ENCODE measurements at regions of chr1 and their contacts with region 1.

Region 1: DNA sequence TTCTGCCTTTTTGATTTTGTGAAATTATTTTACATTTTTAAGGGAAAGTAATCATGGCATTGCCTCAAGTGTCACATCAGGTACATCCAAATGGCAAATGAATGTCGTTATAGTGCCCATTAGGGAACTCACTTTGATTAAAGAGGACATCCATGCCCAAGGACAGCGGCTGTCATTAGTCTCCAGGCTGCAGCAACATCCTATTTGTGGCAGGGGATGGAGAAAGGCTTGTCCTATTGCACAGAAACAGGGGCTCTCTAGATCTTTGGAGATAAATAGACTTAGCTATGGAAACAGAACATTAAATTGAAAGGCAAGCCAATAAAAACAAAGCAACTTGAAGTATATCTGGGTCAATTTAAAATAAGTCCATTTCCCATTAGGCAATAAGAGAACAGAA is 439.3 kb downstream of the NEGR1 start:
- DNase-seq: no peak
- ATAC-seq: no peak
- H3K4me3 Mint-ChIP-seq: no peak overlapping the region
- H3K27ac Mint-ChIP-seq: no peak overlapping the region
- H3K4me1 Mint-ChIP-seq: no peaks in the 10 kb centered on the region
- H3K27me3 Mint-ChIP-seq: no peaks in the 10 kb centered on the region

Region 2: DNA sequence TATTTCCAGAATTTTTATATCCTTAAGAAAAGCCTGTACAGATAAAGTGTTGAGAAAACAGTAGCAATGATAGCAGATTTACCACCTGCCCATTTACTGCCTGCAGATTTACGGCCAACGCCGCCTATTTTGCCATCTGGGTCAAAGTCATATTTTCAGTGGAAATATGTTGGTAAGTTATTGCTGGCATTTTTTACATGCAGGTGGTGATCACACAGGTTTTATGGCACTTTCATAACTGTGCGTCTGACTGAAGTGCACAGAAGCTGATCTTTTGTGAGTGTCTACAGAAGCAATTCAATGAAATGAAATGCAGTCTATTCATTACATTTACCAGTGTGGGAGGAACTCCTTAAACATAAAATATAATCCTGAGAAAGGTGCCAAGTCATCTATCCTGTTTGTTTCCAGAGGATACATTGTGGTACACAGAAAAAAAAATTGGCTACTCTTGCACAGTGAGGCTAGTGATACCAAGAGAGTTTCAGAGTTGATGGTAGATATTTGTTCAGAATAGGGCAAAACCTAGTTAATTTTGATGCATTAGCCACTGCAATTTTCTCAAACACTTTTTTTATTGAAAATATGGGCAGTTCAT is 19.2 kb before region 1 on chr1:
- CTCF ChIA-PET with region 1: no interaction called
- POLR2A ChIA-PET with region 1: no interaction called
- intact Hi-C with region 1: loop called in 1 of 2 experiments (anchors 2 kb)
- DNase-seq: no peak
- ATAC-seq: no peak
- H3K4me3 Mint-ChIP-seq: no peak overlapping the region
- H3K27ac Mint-ChIP-seq: no peak overlapping the region
- H3K4me1 Mint-ChIP-seq: no peaks in the 10 kb centered on the region
- H3K27me3 Mint-ChIP-seq: no peaks in the 10 kb centered on the region

Measured in activated CD4-positive, alpha-beta T cell treated with anti-CD3 and anti-CD28 coated beads for 36 hours (primary cell).